B cell (primary cell): ENCODE measurements at regions of chr10 and their contacts with region 1.

Region 1: DNA sequence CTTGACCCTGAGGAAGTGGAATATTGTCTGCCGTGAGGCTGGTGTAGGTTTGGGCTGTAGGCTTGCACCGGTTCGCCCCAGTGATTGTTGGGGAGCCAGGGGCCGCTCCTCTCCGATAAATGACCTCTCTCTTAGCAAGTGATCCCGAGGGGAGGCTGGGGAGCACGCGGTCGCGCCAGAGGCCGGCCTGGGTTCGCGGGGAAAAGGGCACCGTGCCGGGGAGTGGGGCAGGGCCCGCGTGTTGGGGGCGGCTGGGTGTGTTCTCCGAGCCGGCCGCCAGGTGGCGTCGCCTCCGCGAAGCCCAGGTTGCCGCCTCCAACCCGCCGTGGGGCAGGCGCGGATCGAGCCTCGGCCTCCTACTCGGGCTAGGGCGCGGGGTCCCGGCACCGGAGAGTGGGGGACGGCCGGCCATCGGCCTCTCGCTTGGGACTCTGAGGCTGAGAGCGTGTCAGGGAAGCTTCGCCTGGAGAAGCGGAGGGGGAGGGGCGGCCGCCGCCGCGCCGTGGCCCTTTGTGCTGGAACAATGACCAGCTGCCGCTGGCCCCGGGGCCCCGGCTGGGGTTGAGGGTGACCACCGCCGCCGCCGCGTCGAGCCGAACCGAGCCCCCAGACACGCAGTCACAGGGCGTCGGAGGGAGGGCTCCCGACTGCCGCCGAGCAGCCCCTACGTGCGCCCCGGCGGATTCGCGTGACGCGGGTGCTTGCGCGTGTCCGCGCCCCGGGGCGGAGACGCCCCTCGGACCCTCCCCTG is 442 bp upstream of the LZTS2 start:
- DNase-seq: peak; percentile 88
- ATAC-seq: peak; percentile 59
- H3K4me3 ChIP-seq: peak overlapping the region; percentile 37 to 89 (median 86)
- H3K4me3 Mint-ChIP-seq: peak overlapping the region; percentile 95
- H3K27ac ChIP-seq: peak overlapping the region; percentile 84 to 87
- H3K27ac Mint-ChIP-seq: peak overlapping the region; percentile 96
- H3K4me1 ChIP-seq: peaks cover 22 to 34% of the 10 kb centered on the region in 2 donors
- H3K4me1 Mint-ChIP-seq: peaks cover 29% of the 10 kb centered on the region
- H3K27me3 ChIP-seq: peaks cover 0 to 2% (median 0%) of the 10 kb centered on the region in 4 experiments
- H3K27me3 Mint-ChIP-seq: no peaks in the 10 kb centered on the region
- CTCF ChIP-seq: peak; percentile 88

Region 2: GRCh38 chr10:99141022-99141422 is 1858.1 kb before region 1 on chr10:
- CTCF ChIA-PET with region 1: no interaction called
- POLR2A ChIA-PET with region 1: no interaction called
- intact Hi-C with region 1: no loop called
- DNase-seq: no peak
- ATAC-seq: no peak
- H3K4me3 ChIP-seq: no peak overlapping the region
- H3K4me3 Mint-ChIP-seq: no peak overlapping the region
- H3K27ac ChIP-seq: no peak overlapping the region
- H3K27ac Mint-ChIP-seq: no peak overlapping the region
- H3K4me1 ChIP-seq: no peaks in the 10 kb centered on the region
- H3K4me1 Mint-ChIP-seq: no peaks in the 10 kb centered on the region
- H3K27me3 ChIP-seq: no peaks in the 10 kb centered on the region
- H3K27me3 Mint-ChIP-seq: peaks cover 15% of the 10 kb centered on the region
- CTCF ChIP-seq: no peak

Region 3: DNA sequence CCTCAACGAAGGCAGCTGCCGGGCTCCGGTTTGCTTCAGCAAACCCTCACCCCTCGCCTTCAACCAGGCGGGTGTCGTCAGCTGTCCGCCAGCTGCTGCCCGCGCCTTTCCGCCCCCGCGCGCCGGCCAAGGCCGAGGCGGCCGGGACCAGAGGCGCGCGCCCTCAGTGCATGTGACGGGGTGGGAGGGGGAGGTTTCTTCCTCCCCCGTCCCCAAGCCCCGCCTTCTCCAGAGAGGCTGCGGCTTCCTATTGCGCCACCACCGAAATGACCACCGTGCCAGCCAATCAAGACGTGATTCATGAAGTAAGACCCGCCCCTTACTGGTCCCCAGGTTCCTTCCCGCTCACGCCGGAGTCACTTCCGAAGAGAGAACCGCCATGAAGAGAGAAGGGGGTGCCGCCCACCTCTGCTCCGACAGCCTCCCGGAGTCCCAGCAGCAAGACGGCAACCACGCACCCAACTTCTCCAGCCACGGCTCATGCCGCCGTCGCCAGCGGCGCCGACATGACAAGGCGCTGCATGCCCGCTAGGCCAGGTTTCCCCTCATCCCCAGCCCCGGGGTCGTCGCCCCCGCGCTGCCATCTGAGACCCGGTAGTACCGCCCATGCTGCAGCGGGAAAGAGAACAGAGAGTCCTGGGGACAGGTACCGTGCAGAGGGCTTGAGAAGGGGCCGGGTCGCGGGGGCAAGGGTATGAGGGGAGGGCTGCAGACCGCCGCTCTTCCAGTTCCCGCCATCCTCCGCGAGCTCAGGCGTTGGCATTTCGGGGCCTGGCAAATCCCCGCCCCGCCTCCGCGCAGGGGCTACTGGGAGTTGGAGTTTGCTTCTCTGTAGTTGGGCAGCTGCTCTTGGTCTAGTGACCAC is 86.3 kb before region 1 on chr10 and contains the start of gene SLF2:
- CTCF ChIA-PET with region 1: interaction called, 3 read pairs
- POLR2A ChIA-PET with region 1: interaction called, 3 read pairs
- intact Hi-C with region 1: loop called (anchors 1 kb)
- DNase-seq: peak; percentile 97
- ATAC-seq: peak; percentile 97
- H3K4me3 ChIP-seq: peak within 1 kb of the TSS; percentile 66 to 94 (median 90)
- H3K4me3 Mint-ChIP-seq: peak within 1 kb of the TSS; percentile 99
- H3K27ac ChIP-seq: peak within 1 kb of the TSS; percentile 66 to 90
- H3K27ac Mint-ChIP-seq: peak within 1 kb of the TSS; percentile 97
- H3K4me1 ChIP-seq: peaks cover 20% of the 10 kb centered on the region in 2 donors
- H3K4me1 Mint-ChIP-seq: peaks cover 34% of the 10 kb centered on the region
- H3K27me3 ChIP-seq: no peaks in the 10 kb centered on the region
- H3K27me3 Mint-ChIP-seq: no peaks in the 10 kb centered on the region
- CTCF ChIP-seq: no peak
- total RNA-seq, gene SLF2: 65.6 and 66.7 TPM in 2 replicates

Region 4: DNA sequence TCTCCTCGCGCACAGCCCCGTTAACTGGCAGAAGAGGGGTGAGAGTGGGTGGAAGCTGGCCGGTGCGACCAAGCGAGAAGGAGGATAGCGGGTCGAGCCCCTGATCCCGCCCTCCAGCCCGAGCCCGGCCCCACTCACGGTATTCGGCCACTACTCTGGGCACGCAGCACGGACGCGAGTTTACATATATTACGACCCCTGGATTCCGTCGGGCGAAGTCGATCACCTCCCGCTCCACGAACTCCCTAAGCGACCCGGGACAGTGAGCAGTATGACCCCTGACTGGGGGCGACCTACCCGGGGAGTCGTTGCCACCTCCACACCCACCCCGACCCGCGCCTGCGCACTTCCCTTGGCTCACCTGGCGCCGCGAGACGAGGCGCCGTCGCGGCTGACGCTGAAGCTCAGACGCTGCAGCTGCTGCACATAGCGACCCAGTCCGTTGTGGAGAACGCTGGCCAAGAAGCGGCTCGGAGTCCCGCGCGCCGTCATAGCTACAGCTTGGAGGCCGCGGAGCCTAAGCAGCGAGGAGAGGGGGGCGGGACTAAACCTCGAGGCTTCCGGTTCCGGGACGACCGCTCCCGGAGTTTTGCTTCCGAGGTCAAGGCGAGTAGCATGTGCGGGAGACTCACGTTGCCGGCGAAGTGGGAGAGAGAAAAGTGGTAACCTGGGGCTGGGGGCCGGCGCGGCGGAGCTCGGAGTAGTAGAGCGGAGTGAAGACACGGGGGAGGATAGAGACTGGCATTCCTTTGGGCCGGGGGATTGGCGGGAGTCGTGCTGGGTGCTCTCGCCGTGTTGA is 12.0 kb before region 1 on chr10 and contains the starts of genes MRPL43 and TWNK:
- CTCF ChIA-PET with region 1: interaction called, 49 read pairs
- POLR2A ChIA-PET with region 1: interaction called, 15 read pairs
- intact Hi-C with region 1: loop called (anchors 1 kb)
- DNase-seq: peak; percentile 91
- ATAC-seq: peak; percentile 93
- H3K4me3 ChIP-seq: peak within 1 kb of the TSS; percentile 68 to 95 (median 94)
- H3K4me3 Mint-ChIP-seq: peak within 1 kb of the TSS; percentile 97
- H3K27ac ChIP-seq: peak within 1 kb of the TSS; percentile 15 to 51
- H3K27ac Mint-ChIP-seq: peak within 1 kb of the TSS; percentile 84
- H3K4me1 ChIP-seq: peaks cover 18 to 28% of the 10 kb centered on the region in 2 donors
- H3K4me1 Mint-ChIP-seq: peaks cover 36% of the 10 kb centered on the region
- H3K27me3 ChIP-seq: no peaks in the 10 kb centered on the region
- H3K27me3 Mint-ChIP-seq: no peaks in the 10 kb centered on the region
- CTCF ChIP-seq: no peak
- total RNA-seq, gene MRPL43: 56.2 and 57.8 TPM in 2 replicates
- total RNA-seq, gene TWNK: 11.8 and 12.0 TPM in 2 replicates

Region 5: GRCh38 chr10:101012525-101013364 is 13.6 kb after region 1 on chr10:
- CTCF ChIA-PET with region 1: interaction called, 70 read pairs
- POLR2A ChIA-PET with region 1: interaction called, 9 read pairs
- intact Hi-C with region 1: loop called (anchors 1 kb)
- DNase-seq: peak; percentile 77
- ATAC-seq: peak; percentile 86
- H3K4me3 ChIP-seq: no peak overlapping the region
- H3K4me3 Mint-ChIP-seq: no peak overlapping the region
- H3K27ac ChIP-seq: no peak overlapping the region
- H3K27ac Mint-ChIP-seq: no peak overlapping the region
- H3K4me1 ChIP-seq: peaks cover 8 to 14% of the 10 kb centered on the region in 2 donors
- H3K4me1 Mint-ChIP-seq: peaks cover 16% of the 10 kb centered on the region
- H3K27me3 ChIP-seq: peaks cover 0 to 32% (median 18%) of the 10 kb centered on the region in 4 experiments
- H3K27me3 Mint-ChIP-seq: peaks cover 27% of the 10 kb centered on the region
- CTCF ChIP-seq: peak; percentile 83

Region 6: GRCh38 chr10:101018600-101019439 is 19.7 kb after region 1 on chr10:
- CTCF ChIA-PET with region 1: interaction called, 70 read pairs
- POLR2A ChIA-PET with region 1: interaction called, 9 read pairs
- intact Hi-C with region 1: no loop called
- DNase-seq: peak; percentile 67
- ATAC-seq: peak; percentile 46
- H3K4me3 ChIP-seq: peak overlapping the region in 1 of 5 experiments; percentile 23
- H3K4me3 Mint-ChIP-seq: peak overlapping the region; percentile 38
- H3K27ac ChIP-seq: no peak overlapping the region
- H3K27ac Mint-ChIP-seq: no peak overlapping the region
- H3K4me1 ChIP-seq: peaks cover 16 to 22% of the 10 kb centered on the region in 2 donors
- H3K4me1 Mint-ChIP-seq: peaks cover 16% of the 10 kb centered on the region
- H3K27me3 ChIP-seq: peaks cover 0 to 46% (median 24%) of the 10 kb centered on the region in 4 experiments
- H3K27me3 Mint-ChIP-seq: peaks cover 38% of the 10 kb centered on the region
- CTCF ChIP-seq: peak; percentile 69

Region 7: DNA sequence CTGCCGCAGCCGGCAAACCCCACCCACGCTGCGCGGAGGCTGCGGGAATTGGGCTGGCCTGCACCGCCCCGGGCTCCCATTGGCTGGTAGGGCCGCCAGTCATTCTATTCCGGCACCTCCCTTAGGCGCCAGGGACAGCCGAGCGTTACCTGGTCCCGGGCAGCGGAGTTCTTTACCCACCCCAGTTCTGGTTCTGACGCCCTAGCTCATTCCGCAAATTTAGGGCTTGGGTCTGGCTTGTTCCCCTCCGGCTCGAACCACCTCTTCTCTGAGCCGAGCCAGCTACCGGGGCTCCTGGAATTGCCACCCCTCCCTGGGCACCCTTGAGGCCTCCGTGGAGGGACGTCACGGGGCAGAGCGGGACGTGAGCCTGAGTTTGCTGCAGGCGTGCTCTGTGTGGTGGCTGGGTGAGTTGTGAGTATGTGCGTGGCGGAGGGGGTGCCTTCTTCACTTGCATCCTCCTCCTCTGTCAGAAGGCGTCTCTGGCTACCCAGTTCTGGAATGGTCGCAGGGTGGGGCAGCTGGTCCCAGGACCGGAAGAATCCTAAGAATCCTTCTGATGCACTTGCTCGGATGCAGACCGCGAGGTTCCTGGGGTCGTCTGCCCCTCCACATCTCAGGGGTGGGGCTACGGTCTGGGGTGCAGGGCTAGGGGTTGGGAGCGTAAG is 32.1 kb after region 1 on chr10 and contains the starts of genes PDZD7 and SFXN3:
- CTCF ChIA-PET with region 1: interaction called, 8 read pairs
- POLR2A ChIA-PET with region 1: interaction called, 6 read pairs
- intact Hi-C with region 1: loop called (anchors 1 kb)
- DNase-seq: peak; percentile 95
- ATAC-seq: peak; percentile 89
- H3K4me3 ChIP-seq: peak within 1 kb of the TSS; percentile 26 to 96 (median 79)
- H3K4me3 Mint-ChIP-seq: peak within 1 kb of the TSS; percentile 88
- H3K27ac ChIP-seq: peak within 1 kb of the TSS; percentile 63 to 65
- H3K27ac Mint-ChIP-seq: peak within 1 kb of the TSS; percentile 90
- H3K4me1 ChIP-seq: peaks cover 14 to 26% of the 10 kb centered on the region in 2 donors
- H3K4me1 Mint-ChIP-seq: peaks cover 19% of the 10 kb centered on the region
- H3K27me3 ChIP-seq: peaks cover 0 to 29% (median 13%) of the 10 kb centered on the region in 4 experiments
- H3K27me3 Mint-ChIP-seq: peaks cover 15% of the 10 kb centered on the region
- CTCF ChIP-seq: no peak
- total RNA-seq, gene PDZD7: 0.69 and 0.85 TPM in 2 replicates
- total RNA-seq, gene SFXN3: 38.0 and 44.2 TPM in 2 replicates

Region 8: GRCh38 chr10:101067356-101068083 is 68.4 kb after region 1 on chr10:
- CTCF ChIA-PET with region 1: interaction called, 12 read pairs
- POLR2A ChIA-PET with region 1: no interaction called
- intact Hi-C with region 1: no loop called
- DNase-seq: peak; percentile 83
- ATAC-seq: peak; percentile 63
- H3K4me3 ChIP-seq: peak overlapping the region; percentile 28 to 80 (median 71)
- H3K4me3 Mint-ChIP-seq: peak overlapping the region; percentile 98
- H3K27ac ChIP-seq: no peak overlapping the region
- H3K27ac Mint-ChIP-seq: peak overlapping the region; percentile 66
- H3K4me1 ChIP-seq: peaks cover 50 to 53% of the 10 kb centered on the region in 2 donors
- H3K4me1 Mint-ChIP-seq: peaks cover 52% of the 10 kb centered on the region
- H3K27me3 ChIP-seq: peaks cover 0 to 49% (median 21%) of the 10 kb centered on the region in 4 experiments
- H3K27me3 Mint-ChIP-seq: peaks cover 25% of the 10 kb centered on the region
- CTCF ChIP-seq: peak; percentile 95

Region 9: DNA sequence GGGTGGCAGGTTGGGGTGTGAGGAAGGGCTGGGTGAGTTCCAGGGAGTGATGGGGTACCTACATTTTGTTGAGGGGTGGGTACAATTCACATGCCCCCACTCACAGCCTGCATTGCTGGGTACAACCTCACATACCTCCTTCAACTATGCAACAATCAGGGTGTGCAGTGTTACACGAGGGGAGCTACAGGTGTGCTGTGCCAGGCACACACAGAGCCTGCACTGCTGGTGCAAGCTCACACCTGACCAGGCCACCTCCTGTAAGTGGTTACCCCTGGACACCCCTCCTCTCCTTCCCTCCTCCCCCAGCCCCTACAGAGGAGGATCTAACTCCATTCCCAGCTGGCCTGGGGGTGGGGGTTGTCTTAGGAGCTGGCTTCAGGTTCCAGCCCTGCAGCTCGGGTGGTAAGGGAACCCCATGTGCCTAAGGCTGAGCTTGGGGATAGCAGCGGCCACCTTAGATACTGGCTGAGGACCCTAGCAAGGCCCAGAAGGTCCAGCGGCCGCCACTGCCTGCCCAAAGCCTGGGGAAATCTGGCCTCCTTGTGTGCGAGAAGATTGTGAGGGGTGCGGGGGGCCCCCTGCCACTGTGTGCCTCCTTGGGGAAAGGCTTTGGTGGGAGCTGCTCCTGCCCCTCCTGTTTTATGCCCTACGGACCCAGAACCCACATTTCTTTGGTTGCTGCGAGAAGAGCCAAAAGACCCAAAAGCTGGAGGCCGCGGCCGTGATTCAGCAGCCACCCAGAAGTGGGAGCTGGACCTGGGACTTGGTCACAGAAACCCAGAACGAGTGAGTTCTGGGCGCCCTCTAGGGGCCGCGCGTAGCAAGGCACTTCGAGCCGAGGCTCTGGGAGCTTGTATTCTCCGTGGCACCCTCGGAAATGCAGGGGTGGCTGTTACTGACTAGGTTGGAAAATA is 142.7 kb after region 1 on chr10:
- CTCF ChIA-PET with region 1: no interaction called
- POLR2A ChIA-PET with region 1: no interaction called
- intact Hi-C with region 1: no loop called
- DNase-seq: peak; percentile 88
- ATAC-seq: peak; percentile 88
- H3K4me3 ChIP-seq: no peak overlapping the region
- H3K4me3 Mint-ChIP-seq: no peak overlapping the region
- H3K27ac ChIP-seq: no peak overlapping the region
- H3K27ac Mint-ChIP-seq: no peak overlapping the region
- H3K4me1 ChIP-seq: peaks cover 34 to 46% of the 10 kb centered on the region in 2 donors
- H3K4me1 Mint-ChIP-seq: peaks cover 24% of the 10 kb centered on the region
- H3K27me3 ChIP-seq: peaks cover 0 to 92% (median 68%) of the 10 kb centered on the region in 4 experiments
- H3K27me3 Mint-ChIP-seq: peaks cover 73% of the 10 kb centered on the region
- CTCF ChIP-seq: peak; percentile 98